ENCODE measurements at regions of chr12 and their contacts with region 1.

Region 1: DNA sequence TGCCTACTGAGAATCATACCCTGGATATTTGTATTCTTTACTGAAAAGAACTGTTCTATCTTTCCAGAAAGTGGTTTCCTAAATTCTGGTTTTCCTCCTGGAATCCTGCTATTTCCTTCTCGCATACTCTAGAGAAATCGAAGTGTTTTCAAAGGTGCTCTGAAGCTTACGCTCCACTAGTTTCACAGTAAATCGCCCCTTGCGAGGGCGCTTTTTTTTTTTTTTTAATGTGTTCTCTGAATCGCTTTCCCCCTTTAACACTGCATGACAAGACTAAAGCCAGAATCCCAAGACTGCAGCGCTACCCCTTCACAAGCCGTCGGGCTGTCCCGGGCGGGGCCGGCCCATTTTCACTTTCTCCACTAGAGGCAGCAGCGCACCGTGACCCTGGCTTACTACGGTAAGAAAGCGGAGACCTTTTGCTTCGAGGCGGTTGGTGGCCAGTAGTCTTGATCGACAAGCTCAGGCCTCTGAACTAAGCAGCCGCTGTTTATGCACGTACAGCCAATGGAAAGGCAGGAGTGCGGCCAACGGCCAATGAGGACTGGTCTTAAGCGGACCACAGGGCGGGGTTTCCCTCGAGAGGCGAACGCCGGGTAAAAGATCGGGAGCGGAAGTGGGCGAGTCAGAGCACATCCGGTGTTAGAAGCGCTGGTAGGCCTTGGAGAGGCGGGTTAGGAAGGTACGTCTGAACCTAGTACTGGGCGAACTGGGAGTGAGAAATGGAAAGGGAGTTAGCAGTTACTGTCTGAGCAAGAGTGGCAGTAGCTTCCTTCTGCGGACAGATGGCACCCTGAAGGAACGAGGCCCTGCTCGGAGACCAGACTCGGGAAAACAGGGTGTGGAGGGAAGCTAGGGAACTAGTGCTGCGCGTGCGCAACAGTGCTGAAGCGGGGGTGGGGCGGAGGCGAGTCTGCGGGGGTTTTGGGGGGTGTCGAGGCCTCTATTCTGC is at the start of gene TMBIM6:
- DNase-seq: peak; percentile 96 to 100 (median 98)
- ATAC-seq: peak; percentile 86
- H3K4me3 ChIP-seq: peak within 1 kb of the TSS; percentile 63 to 88
- H3K4me3 Mint-ChIP-seq: peak within 1 kb of the TSS; percentile 93
- H3K27ac ChIP-seq: peak within 1 kb of the TSS; percentile 96 to 99
- H3K27ac Mint-ChIP-seq: peak within 1 kb of the TSS; percentile 98
- H3K4me1 ChIP-seq: peaks cover 38% of the 10 kb centered on the region
- H3K4me1 Mint-ChIP-seq: peaks cover 41% of the 10 kb centered on the region
- H3K27me3 ChIP-seq: no peaks in the 10 kb centered on the region
- H3K27me3 Mint-ChIP-seq: no peaks in the 10 kb centered on the region
- CTCF ChIP-seq: peak; percentile 93
- total RNA-seq, gene TMBIM6: 289 to 309 TPM

Region 2: DNA sequence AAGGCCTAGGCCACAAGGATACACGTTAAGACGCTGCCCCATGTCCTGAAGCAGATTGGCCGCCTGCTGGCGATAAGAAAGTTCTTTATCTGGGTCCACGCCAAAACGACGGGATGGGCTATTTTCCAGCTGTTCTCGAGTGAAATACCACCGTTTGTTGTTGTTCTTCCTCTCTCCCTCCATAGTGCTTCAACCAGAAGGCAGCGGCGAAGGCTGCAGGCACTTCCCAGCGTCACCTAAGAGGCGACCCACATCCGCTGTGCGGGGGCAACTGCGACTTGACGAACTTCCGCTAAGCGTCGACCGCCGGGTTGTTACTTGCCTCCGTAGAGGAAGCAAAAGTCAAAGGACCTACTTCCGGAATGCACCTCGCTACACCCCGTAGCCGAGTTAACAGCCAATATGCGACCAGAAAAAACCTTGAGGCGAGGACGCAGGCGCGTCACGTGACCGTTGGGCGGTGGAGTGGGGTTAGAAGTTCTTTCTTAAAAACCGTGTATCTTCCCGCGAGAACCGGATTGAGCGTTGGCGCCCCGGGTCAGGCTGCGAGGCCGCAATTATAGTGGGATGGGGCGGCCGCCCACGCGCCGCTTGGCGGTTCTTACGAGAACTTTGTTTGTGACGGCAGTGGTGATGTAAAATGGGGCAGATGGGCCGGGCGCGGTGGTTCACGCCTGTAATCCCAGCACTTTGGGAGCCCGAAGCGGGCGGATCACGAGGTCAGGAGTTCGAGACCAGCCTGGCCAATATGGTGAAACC is 1024.5 kb before region 1 on chr12 and contains the start of gene CCNT1:
- CTCF ChIA-PET with region 1: no interaction called
- POLR2A ChIA-PET with region 1: no interaction called
- intact Hi-C with region 1: loop called in 1 of 2 experiments (anchors 5 kb)
- DNase-seq: peak; percentile 96 to 100 (median 97)
- ATAC-seq: peak; percentile 86
- H3K4me3 ChIP-seq: peak within 1 kb of the TSS; percentile 84
- H3K4me3 Mint-ChIP-seq: peak within 1 kb of the TSS; percentile 92
- H3K27ac ChIP-seq: peak within 1 kb of the TSS; percentile 96 to 99
- H3K27ac Mint-ChIP-seq: peak within 1 kb of the TSS; percentile 98
- H3K4me1 ChIP-seq: peaks cover 30% of the 10 kb centered on the region
- H3K4me1 Mint-ChIP-seq: peaks cover 40% of the 10 kb centered on the region
- H3K27me3 ChIP-seq: no peaks in the 10 kb centered on the region
- H3K27me3 Mint-ChIP-seq: no peaks in the 10 kb centered on the region
- CTCF ChIP-seq: no peak
- total RNA-seq, gene CCNT1: 127 to 132 TPM

Region 3: DNA sequence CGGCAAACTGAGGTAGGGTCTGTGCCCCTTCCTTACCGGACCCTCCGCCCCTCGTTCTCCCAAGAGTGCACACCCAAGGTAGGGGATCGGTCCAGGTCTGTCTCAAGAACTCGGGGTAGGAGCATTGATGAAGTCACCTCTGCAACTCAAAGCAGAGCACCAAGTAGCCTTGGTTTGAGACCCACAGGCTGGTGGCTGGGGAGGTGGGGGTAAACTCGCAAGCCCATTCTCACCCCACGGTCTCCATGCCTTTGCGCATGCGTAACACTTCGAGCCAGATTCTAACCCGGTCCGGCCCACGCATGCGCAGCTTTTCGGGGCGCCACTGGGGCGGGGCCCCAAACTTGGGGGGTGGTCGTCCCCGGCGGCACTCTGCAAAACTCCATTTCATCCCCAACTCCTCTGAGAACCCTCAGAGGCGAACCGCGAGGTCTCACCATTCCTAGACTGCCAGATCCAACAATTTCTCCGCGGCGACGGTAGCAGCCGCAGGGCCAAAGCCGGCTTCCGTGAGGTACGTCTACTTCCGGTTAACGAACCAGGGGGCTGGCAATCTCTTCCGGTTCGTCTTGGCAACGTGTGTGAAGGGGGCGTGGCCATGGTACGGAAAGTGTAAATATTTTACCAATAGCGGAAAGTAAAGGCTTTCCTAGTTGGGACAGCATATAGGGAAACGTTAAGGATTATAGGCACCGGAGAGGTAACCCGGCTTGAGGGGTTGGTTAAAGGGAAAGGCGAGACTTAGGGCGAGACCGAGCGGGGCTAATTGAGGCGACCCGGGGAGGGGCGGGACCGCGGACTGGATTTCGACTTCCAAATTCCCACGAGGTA is 173.4 kb before region 1 on chr12 and contains the start of gene MCRS1:
- CTCF ChIA-PET with region 1: no interaction called
- POLR2A ChIA-PET with region 1: interaction called, 8 read pairs
- intact Hi-C with region 1: loop called (anchors 1 to 5 kb)
- DNase-seq: peak; percentile 74 to 96 (median 91)
- ATAC-seq: peak; percentile 85
- H3K4me3 ChIP-seq: peak within 1 kb of the TSS; percentile 80 to 89
- H3K4me3 Mint-ChIP-seq: peak within 1 kb of the TSS; percentile 99
- H3K27ac ChIP-seq: peak within 1 kb of the TSS; percentile 93 to 98
- H3K27ac Mint-ChIP-seq: peak within 1 kb of the TSS; percentile 100
- H3K4me1 ChIP-seq: peaks cover 59% of the 10 kb centered on the region
- H3K4me1 Mint-ChIP-seq: peaks cover 63% of the 10 kb centered on the region
- H3K27me3 ChIP-seq: no peaks in the 10 kb centered on the region
- H3K27me3 Mint-ChIP-seq: no peaks in the 10 kb centered on the region
- CTCF ChIP-seq: no peak
- total RNA-seq, gene MCRS1: 63.7 to 70.9 TPM

Region 4: DNA sequence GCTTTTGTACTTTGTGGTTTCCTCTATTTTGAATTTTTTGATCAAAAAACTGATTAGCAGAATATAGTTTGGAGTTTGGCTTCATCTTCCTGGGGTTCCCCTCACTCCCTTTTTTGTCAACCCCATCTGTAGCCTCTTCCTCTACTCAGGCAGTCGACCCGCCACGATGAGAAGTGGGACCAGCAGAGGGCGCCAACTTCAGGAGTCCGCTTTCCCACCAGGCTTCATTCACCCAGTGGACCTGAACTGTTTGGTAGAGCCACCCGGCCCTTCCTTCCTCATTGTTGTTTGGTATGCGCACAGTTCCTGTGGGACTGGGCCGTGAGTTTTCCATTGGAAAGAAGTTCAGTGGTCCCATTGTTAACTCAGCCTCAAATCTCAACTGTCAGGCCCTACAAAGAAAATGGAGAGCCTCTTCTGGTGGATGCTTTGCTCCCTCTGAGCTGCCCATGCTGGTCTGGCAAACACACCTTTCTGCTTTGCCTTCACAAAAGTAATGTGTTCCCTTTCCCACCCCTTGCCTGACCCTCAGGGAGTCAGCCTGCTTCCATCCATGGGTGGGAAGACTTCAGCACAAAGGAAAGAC is 21.9 kb after region 1 on chr12:
- CTCF ChIA-PET with region 1: interaction called, 48 read pairs
- POLR2A ChIA-PET with region 1: interaction called, 24 read pairs
- intact Hi-C with region 1: loop called (anchors 1 kb)
- DNase-seq: peak; percentile 58 to 87 (median 83)
- ATAC-seq: peak; percentile 82
- H3K4me3 ChIP-seq: no peak overlapping the region
- H3K4me3 Mint-ChIP-seq: peak overlapping the region; percentile 37
- H3K27ac ChIP-seq: peak overlapping the region in 1 of 2 experiments; percentile 69
- H3K27ac Mint-ChIP-seq: peak overlapping the region; percentile 83
- H3K4me1 ChIP-seq: peaks cover 51% of the 10 kb centered on the region
- H3K4me1 Mint-ChIP-seq: peaks cover 59% of the 10 kb centered on the region
- H3K27me3 ChIP-seq: no peaks in the 10 kb centered on the region
- H3K27me3 Mint-ChIP-seq: no peaks in the 10 kb centered on the region
- CTCF ChIP-seq: peak; percentile 85

Region 5: GRCh38 chr12:50025187-50026059 is 284.2 kb after region 1 on chr12 and contains the start of gene RACGAP1:
- CTCF ChIA-PET with region 1: no interaction called
- POLR2A ChIA-PET with region 1: no interaction called
- intact Hi-C with region 1: loop called in 1 of 2 experiments (anchors 5 kb)
- DNase-seq: peak; percentile 88 to 99 (median 94)
- ATAC-seq: peak; percentile 97
- H3K4me3 ChIP-seq: peak within 1 kb of the TSS; percentile 62 to 78
- H3K4me3 Mint-ChIP-seq: peak within 1 kb of the TSS; percentile 98
- H3K27ac ChIP-seq: peak within 1 kb of the TSS; percentile 38 to 63
- H3K27ac Mint-ChIP-seq: peak within 1 kb of the TSS; percentile 86
- H3K4me1 ChIP-seq: no peaks in the 10 kb centered on the region
- H3K4me1 Mint-ChIP-seq: peaks cover 16% of the 10 kb centered on the region
- H3K27me3 ChIP-seq: no peaks in the 10 kb centered on the region
- H3K27me3 Mint-ChIP-seq: no peaks in the 10 kb centered on the region
- CTCF ChIP-seq: no peak
- total RNA-seq, gene RACGAP1: 2.2 to 2.8 TPM

Measured in CD8-positive, alpha-beta T cell (primary cell).